Testis (tissue), 5 donors: ENCODE measurements at regions of chr6 and their contacts with region 1.

Region 1: GRCh38 chr6:18503593-18504231 is 116.6 kb downstream of the RNF144B start:
- DNase-seq: peak; percentile 76
- H3K4me3 ChIP-seq: no peak overlapping the region
- H3K27ac ChIP-seq: peak overlapping the region in 1 of 2 donors; percentile 60
- H3K4me1 ChIP-seq: no peaks in the 10 kb centered on the region
- H3K27me3 ChIP-seq: no peaks in the 10 kb centered on the region
- CTCF ChIP-seq: peak; percentile 55 to 84 (median 69)
- POLR2A ChIP-seq: no peak

Region 2: GRCh38 chr6:18327626-18328025 is 176.1 kb before region 1 on chr6:
- intact Hi-C with region 1: loop called (anchors 5 kb)
- DNase-seq: peak; percentile 24
- H3K4me3 ChIP-seq: no peak overlapping the region
- H3K27ac ChIP-seq: peak overlapping the region; percentile 10 to 75
- H3K4me1 ChIP-seq: no peaks in the 10 kb centered on the region
- H3K27me3 ChIP-seq: no peaks in the 10 kb centered on the region
- CTCF ChIP-seq: no peak
- POLR2A ChIP-seq: no peak